Ascending aorta (tissue), 2 donors: ENCODE measurements at regions of chr9 and their contacts with region 1.

Region 1: GRCh38 chr9:22446950-22447617 is 460 bp downstream of the DMRTA1 start:
- DNase-seq: no peak
- H3K4me3 ChIP-seq: peak overlapping the region; percentile 88 to 98
- H3K27ac ChIP-seq: peak overlapping the region; percentile 71 to 89
- H3K4me1 ChIP-seq: peaks cover 3 to 4% of the 10 kb centered on the region in 2 donors
- H3K27me3 ChIP-seq: peaks cover 4% of the 10 kb centered on the region
- CTCF ChIP-seq: peak in 1 of 3 experiments; percentile 24

Region 2: GRCh38 chr9:22307013-22307711 is 139.9 kb before region 1 on chr9:
- intact Hi-C with region 1: loop called (anchors 2 kb)
- DNase-seq: no peak
- H3K4me3 ChIP-seq: no peak overlapping the region
- H3K27ac ChIP-seq: no peak overlapping the region
- H3K4me1 ChIP-seq: no peaks in the 10 kb centered on the region
- H3K27me3 ChIP-seq: no peaks in the 10 kb centered on the region
- CTCF ChIP-seq: peak; percentile 5 to 53 (median 34)